ENCODE measurements at regions of chr3 and their contacts with region 1.

Region 1: DNA sequence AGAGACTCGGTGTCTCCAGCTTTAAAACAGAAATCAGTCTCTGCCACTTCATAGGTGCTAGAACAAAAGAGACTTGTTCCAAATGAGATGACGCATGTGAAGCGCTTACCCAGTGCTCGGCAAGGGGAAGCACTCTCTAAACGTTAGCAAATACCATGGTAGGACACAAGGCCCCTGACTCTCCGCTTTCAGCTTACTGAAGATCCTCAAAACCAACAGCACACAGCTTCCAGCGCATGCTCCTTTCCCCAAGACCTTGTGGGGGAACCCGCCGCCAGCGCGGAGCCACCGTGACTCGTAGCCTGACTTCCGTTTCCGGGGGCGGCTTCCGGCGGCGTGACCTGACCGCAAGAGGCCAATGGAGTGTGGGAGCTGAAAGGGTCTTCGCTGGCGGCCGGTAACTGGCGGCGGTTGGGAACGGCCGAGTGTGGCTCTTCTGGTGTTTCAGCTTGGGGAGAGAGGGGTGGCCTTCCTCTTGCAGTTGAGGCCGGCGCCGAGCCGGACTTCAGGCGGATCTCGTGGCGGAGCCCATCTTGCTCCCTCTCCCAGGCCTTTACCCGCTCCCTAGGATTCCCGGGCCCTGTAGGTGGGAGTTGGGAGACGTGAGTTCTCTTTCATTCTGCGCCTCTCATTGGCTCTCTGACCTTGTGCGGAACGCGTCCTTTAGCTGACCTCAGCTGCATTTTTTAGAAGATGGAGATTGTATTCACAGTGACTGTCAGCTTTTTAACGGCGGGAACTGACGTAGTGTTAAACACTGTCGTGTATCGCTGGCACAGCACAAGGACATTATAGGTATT is at the start of gene THUMPD3:
- DNase-seq: peak; percentile 89
- H3K4me3 Mint-ChIP-seq: peak within 1 kb of the TSS; percentile 97
- H3K27ac Mint-ChIP-seq: peak within 1 kb of the TSS; percentile 99
- H3K4me1 Mint-ChIP-seq: peaks cover 5% of the 10 kb centered on the region
- H3K27me3 Mint-ChIP-seq: no peaks in the 10 kb centered on the region
- CTCF ChIP-seq: no peak
- total RNA-seq, gene THUMPD3: 53.4 and 63.0 TPM in 2 replicates

Region 2: DNA sequence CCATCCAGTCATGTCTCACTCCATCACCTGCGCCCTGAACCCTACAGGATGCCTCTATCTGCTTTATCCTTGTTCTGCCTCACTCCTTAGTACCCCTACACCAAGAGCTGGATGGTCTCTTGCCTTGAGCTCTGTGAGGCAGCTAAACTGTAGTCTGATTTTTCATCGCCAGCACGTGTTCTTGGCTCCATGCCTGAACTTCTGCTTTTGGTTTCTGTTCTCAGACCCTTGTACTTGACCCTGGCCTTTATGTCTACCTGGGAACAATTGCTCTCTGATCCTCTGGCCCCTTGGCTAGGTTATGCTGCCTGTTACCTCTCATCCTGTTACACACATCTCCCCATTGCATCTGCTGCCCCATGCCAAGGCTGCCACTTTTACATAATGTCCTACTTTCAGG is 1179.3 kb before region 1 on chr3:
- CTCF ChIA-PET with region 1: no interaction called
- POLR2A ChIA-PET with region 1: no interaction called
- intact Hi-C with region 1: no loop called
- DNase-seq: peak; percentile 15
- H3K4me3 Mint-ChIP-seq: peak overlapping the region; percentile 12
- H3K27ac Mint-ChIP-seq: no peak overlapping the region
- H3K4me1 Mint-ChIP-seq: peaks cover 32% of the 10 kb centered on the region
- H3K27me3 Mint-ChIP-seq: no peaks in the 10 kb centered on the region
- CTCF ChIP-seq: no peak

Region 3: GRCh38 chr3:9373465-9373864 is 10.5 kb after region 1 on chr3:
- CTCF ChIA-PET with region 1: interaction called, 3 read pairs
- POLR2A ChIA-PET with region 1: interaction called, 23 read pairs
- intact Hi-C with region 1: no loop called
- DNase-seq: no peak
- H3K4me3 Mint-ChIP-seq: no peak overlapping the region
- H3K27ac Mint-ChIP-seq: no peak overlapping the region
- H3K4me1 Mint-ChIP-seq: no peaks in the 10 kb centered on the region
- H3K27me3 Mint-ChIP-seq: no peaks in the 10 kb centered on the region
- CTCF ChIP-seq: no peak

Region 4: DNA sequence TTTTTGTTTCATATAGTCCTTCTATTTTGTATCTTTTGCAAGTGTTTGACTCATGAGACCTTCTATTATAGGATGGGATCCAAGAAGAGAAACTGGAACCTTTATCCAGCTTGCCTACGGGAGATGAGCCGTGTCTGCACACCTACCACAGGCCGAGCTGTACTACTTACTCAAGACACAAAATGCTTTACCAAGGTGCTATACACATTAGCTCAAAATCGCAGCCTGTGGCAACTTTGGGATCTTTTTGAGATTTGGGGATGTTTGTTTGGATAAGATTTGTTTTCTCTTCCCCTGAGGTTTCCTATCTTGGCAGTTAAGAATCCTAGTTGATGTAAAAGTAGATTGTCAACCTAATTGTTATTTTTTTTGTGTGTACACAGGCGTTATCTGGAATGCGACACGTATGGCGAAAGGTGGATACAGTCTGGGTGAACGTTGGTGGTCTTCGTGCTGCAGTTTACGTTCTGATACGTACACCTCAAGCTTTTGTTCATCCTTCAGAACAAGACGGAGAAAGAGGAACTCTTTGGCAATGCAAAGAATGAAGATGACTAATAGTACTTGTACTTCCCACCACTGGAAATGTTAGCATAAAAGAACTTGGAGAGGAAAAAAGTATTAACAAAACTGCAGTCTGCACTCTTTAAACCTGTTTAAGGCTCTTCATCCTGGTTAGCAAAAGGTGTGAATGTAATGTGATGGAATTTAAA is 21.4 kb after region 1 on chr3:
- CTCF ChIA-PET with region 1: interaction called, 4 read pairs
- POLR2A ChIA-PET with region 1: interaction called, 19 read pairs
- intact Hi-C with region 1: no loop called
- DNase-seq: no peak
- H3K4me3 Mint-ChIP-seq: no peak overlapping the region
- H3K27ac Mint-ChIP-seq: peak overlapping the region; percentile 73
- H3K4me1 Mint-ChIP-seq: no peaks in the 10 kb centered on the region
- H3K27me3 Mint-ChIP-seq: no peaks in the 10 kb centered on the region
- CTCF ChIP-seq: no peak

Region 5: DNA sequence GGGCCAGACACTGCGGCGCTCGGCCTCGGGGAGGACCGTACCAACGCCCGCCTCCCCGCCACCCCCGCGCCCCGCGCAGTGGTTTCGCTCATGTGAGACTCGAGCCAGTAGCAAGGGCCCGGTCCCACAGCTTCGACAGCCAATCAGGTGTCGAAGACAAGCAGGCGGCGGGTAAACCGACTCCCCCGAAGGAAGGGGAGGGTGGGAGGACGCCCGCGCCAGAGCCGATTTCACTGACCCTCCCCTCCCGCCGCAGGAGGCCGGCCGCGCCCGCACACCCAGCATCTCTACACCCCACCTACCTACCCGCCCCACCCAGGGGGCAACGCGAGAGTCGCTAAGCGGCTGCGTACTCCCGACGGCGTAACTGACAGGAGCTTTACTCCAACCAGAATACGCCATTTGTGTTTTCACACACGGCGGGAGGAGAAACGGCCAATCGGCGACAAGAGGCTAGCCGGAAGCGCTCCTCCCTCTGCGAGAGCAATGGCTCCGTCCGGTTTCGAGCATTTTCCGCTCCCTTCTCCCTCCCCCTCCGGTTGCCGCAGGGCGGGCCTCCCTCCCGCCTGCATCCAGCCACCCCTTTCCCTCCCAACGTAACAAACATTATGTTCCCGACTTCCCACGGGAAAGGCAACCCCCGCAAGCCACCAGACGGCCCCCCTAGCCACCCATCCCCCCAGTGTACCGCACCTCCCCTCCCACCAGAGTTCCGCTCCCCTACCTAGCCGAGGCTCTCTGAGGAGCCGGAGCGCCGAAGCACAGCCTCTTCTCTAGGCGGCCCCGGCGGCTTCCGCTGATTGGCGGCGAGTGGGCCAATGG is 34.0 kb after region 1 on chr3:
- CTCF ChIA-PET with region 1: interaction called, 8 read pairs
- POLR2A ChIA-PET with region 1: interaction called, 158 read pairs
- intact Hi-C with region 1: no loop called
- DNase-seq: peak; percentile 99
- H3K4me3 Mint-ChIP-seq: peak overlapping the region; percentile 81
- H3K27ac Mint-ChIP-seq: peak overlapping the region; percentile 92
- H3K4me1 Mint-ChIP-seq: peaks cover 40% of the 10 kb centered on the region
- H3K27me3 Mint-ChIP-seq: no peaks in the 10 kb centered on the region
- CTCF ChIP-seq: no peak

Region 6: DNA sequence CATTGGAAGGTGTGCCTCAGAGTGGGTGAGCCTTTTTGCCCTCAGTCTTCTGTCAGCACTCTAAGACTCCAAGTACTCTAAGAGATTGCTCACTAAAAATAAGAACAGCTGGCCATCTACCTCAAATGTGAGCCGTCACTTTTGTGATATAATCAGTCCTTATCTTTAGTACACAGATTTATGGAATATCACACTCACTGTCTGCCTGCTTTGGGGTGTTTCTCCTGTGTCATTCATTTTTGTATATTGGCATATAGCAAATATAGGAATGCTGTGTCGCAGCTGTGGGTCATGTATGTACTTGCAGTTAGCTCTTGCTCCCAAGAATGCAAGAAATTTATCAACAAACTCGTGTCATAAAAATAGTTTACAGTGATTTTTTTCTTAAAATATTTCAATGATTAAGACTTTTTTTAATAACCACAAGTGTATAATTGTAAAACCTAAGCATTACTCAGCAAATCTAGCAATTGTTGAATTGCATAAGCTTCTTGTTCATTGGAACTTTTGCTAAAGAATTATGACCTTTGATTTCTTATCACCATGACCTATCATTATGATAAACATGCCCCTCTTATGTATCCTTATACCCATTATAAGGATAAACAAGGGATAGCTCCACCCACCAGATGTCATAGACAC is 53.3 kb after region 1 on chr3:
- CTCF ChIA-PET with region 1: interaction called, 6 read pairs
- POLR2A ChIA-PET with region 1: interaction called, 35 read pairs
- intact Hi-C with region 1: no loop called
- DNase-seq: no peak
- H3K4me3 Mint-ChIP-seq: peak overlapping the region; percentile 31
- H3K27ac Mint-ChIP-seq: peak overlapping the region; percentile 31
- H3K4me1 Mint-ChIP-seq: peaks cover 32% of the 10 kb centered on the region
- H3K27me3 Mint-ChIP-seq: no peaks in the 10 kb centered on the region
- CTCF ChIP-seq: no peak

Region 7: DNA sequence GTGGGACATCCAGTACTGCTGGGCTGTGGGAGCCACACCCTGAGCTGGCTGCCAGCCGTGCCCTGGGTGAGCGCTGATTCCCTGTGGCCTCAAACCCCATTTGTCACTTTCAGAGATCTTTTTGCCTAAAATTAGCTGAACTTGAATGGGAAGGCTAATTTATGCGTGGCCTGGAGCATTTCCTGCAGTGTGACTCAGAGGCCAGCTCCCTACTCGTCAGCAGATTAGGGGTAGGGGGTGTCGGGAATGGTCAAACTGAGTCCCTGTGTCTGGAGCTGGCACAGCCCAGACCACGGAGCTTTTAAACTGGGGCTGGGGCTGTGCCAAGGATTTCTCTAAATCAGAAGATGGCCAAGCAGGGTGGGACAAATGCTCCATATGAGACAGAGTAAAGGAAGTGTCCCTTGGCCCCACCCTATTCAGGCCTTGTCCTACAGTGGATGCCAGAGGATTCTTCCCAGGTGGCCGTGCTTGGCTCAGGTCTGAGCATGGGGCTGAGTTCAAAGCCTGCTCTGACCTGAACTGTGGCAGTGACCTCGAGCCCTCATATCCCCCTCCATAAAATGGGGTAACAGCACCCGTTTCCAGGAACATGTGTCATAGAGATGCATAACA is 1082.7 kb after region 1 on chr3:
- CTCF ChIA-PET with region 1: no interaction called
- POLR2A ChIA-PET with region 1: no interaction called
- intact Hi-C with region 1: no loop called
- DNase-seq: no peak
- H3K4me3 Mint-ChIP-seq: no peak overlapping the region
- H3K27ac Mint-ChIP-seq: no peak overlapping the region
- H3K4me1 Mint-ChIP-seq: peaks cover 6% of the 10 kb centered on the region
- H3K27me3 Mint-ChIP-seq: peaks cover 34% of the 10 kb centered on the region
- CTCF ChIP-seq: no peak

Measured in MCF 10A (cell line).